HepG2 (cell line): ENCODE measurements at regions of chr17 and their contacts with region 1.

Region 1: DNA sequence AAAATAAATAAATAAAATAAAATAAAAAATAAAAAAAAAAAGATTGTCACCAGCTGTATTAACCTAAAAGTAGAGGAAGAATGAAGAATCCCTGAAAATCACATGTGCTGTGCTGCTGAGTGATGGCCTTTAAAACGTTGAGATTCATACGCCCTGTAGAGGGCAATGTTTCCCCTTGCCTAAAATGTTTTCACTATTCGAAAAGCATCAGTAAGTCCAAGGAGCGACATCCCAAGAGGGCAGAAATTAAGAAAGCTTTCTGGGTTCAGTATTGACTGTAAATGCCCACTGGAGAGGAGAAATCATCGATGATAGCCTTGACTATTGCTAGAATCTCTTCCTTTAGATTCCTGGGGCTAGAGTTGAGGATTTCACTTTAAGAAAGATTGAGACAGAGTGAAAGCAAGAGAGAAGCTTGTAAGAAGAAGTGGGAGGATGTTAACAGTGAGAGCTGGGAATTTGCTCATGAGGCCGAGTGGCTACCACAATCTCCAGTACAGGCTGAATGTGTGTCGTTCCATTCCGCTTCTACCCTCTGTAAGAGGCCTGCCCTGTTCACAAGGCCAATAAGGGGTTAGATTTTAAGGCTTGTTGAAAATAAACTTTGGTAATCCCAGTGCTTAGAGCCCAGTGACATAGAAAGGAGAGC is 170.8 kb upstream of the FAM20A start:
- DNase-seq: peak; percentile 71
- ATAC-seq: peak; percentile 75
- H3K4me3 ChIP-seq: peak overlapping the region in 1 of 3 experiments; percentile 11; a peak in 1 of 6 replicates
- H3K27ac ChIP-seq: no peak overlapping the region
- H3K4me1 ChIP-seq: peaks cover 37% of the 10 kb centered on the region
- H3K27me3 ChIP-seq: no peaks in the 10 kb centered on the region
- CTCF ChIP-seq: peak; percentile 86
- EP300 ChIP-seq: no peak
- POLR2A ChIP-seq: no peak
- RAD21 ChIP-seq: peak; percentile 72

Region 2: DNA sequence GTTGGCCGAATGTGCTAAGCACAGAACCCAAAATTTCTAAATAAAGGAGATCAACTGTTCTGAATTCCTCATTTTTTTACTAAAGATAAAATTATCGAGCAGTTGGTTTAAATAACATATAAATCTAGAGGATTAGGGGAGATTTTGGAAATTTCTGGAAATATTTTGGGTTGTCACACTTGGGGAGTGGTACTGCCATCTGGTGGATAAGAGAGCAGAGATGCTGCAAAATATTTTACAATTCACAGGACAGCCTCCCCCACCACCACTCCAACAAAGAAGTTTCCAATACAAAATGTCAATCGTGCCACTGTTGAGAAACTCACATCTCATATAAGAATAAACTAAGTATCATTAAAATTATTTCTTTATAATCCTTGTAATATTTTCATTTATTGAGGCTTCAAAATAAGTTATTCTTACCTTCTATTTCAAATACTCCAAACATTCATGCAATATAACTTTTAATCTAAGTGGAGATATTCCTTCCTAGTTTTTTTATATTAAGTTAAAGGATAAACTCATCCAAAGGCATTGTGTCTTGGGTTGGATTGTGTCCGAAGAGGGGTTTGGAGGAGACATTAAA is 200.2 kb after region 1 on chr17:
- CTCF ChIA-PET with region 1: interaction called, 33 read pairs
- POLR2A ChIA-PET with region 1: no interaction called
- in situ Hi-C with region 1: loop called (anchors 5 kb)
- intact Hi-C with region 1: loop called (anchors 1 kb)
- DNase-seq: peak; percentile 43
- ATAC-seq: no peak
- H3K4me3 ChIP-seq: no peak overlapping the region
- H3K27ac ChIP-seq: no peak overlapping the region
- H3K4me1 ChIP-seq: 0 out of 2 replicates have a peak, but pooled peaks cover 10% of the 10 kb centered on the region
- H3K27me3 ChIP-seq: no peaks in the 10 kb centered on the region
- CTCF ChIP-seq: peak; percentile 73
- EP300 ChIP-seq: peak in 1 of 2 experiments; percentile 38; a peak in 1 of 4 replicates
- POLR2A ChIP-seq: no peak
- RAD21 ChIP-seq: peak; percentile 85

Region 3: DNA sequence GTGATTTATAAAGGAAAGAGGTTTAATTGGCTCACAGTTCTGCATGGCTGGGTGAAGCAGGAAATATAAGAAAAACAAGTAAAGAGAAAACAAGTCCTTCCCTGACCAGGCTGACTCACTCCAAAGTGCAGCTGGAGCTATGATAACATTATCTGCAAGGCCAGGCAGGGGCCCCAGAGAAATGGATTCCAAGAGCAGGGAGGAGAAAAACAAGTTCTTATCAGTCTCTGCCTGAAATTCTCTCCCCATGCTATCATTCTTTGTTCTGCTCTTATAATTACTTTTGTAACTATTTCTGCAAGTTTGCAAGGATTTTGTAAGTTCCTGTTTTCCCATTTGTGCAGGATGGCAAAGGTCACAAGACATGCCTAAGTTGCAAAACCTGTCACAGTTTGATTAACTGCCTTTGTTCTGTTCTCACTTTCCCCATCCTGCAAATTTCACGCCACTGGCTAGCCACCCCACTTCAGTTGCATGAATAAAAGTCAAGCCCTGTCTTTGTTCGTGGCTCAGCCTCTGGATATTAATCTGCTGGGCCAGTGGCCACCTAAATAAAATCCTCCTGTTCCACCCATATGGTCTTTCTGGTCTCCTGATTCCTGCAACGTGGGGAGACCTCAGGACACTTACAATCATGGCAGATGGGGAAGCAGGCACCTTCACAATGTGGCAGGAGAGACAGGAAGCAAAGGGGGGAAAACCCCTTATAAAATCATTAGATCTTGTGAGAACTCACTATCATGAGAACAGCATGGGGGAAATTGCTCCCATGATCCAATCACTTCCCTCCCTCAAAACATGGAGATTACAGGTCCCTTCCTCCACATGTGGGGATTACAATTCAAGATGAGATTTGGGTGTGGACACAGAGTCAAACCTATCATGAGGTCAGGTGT is 275.6 kb after region 1 on chr17:
- CTCF ChIA-PET with region 1: no interaction called
- POLR2A ChIA-PET with region 1: interaction called, 6 read pairs
- in situ Hi-C with region 1: loop called (anchors 25 kb)
- intact Hi-C with region 1: loop called (anchors 1 kb)
- DNase-seq: peak; percentile 100
- ATAC-seq: peak; percentile 98
- H3K4me3 ChIP-seq: peak overlapping the region in 1 of 3 experiments; percentile 23; a peak in 1 of 6 replicates
- H3K27ac ChIP-seq: peak overlapping the region; percentile 93
- H3K4me1 ChIP-seq: peaks cover 73% of the 10 kb centered on the region
- H3K27me3 ChIP-seq: no peaks in the 10 kb centered on the region; a peak in 1 of 5 replicates
- CTCF ChIP-seq: no peak
- EP300 ChIP-seq: peak; percentile 87 to 99
- POLR2A ChIP-seq: no peak
- RAD21 ChIP-seq: no peak

Region 4: DNA sequence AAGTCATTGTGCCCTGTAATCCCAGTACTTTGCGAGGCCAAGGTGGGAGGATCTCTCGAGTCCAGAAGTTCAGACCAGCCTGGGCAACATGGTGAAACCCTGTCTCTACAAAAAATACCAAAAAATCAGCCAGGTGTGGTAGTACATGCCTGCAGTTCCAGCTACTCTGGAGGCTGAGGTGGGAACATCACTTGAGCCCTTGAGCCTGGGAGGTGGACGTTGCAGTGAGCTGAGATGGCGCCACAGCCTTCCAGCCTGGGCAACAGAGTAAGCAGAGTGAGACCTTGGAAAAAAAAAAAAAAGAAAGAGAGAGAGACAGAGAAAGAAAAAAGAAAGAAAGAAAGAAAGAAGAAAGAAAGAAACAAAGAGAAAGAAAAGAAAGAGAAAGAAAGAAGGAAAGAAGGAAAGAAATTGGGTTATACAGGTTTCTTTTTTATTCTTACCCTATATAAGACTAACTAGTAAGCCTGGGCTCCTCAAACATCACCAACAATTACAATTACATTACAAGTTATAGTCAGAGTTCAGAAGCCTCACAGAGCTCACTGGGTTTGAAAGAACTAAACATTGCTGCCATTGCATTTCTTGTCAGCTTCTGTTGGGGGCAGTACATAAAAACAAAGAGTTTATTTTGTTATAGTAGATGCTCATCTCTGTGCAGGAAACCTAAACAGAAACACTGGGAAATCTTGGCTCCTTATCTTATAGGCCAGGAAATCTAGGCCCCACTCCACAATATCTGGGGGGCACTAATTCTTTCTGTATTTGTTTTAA is 295.5 kb after region 1 on chr17:
- CTCF ChIA-PET with region 1: no interaction called
- POLR2A ChIA-PET with region 1: no interaction called
- in situ Hi-C with region 1: loop called (anchors 25 kb)
- intact Hi-C with region 1: loop called (anchors 5 kb)
- DNase-seq: no peak
- ATAC-seq: no peak
- H3K4me3 ChIP-seq: no peak overlapping the region
- H3K27ac ChIP-seq: no peak overlapping the region
- H3K4me1 ChIP-seq: peaks cover 57% of the 10 kb centered on the region
- H3K27me3 ChIP-seq: no peaks in the 10 kb centered on the region
- CTCF ChIP-seq: 0 out of 2 replicates have a peak, but pooled peaks have one; percentile 7
- EP300 ChIP-seq: no peak
- POLR2A ChIP-seq: no peak
- RAD21 ChIP-seq: no peak

Region 5: DNA sequence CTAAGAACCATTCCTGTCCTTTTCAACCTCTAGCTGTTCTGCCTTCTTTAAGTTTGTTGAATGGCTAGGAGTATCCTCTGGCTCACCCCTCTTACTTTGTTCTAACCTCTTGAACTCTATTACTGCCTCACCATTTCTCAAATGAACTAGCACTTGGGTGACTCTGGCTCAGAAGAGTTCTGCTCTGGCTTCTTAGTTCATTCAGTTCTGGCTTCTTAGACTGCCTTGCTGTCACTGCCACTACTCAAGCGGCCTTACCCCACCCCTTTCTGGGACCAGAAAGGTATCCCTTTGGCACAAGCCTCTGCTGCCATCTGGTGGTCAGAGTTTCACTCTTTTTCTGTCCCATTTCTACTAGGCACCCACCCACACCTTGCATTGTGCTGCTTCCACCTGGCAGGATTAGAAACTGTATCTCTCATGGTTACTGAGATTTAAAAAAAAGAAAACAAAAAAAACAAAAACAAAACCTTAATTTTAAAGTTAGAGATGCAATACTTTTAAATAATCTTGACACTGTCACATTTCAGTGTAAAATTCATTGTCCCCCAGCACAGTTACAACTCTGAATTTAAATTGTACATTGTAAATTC is 463.4 kb after region 1 on chr17:
- CTCF ChIA-PET with region 1: interaction called, 117 read pairs
- POLR2A ChIA-PET with region 1: interaction called, 8 read pairs
- in situ Hi-C with region 1: loop called (anchors 5 kb)
- intact Hi-C with region 1: loop called (anchors 1 kb)
- DNase-seq: peak; percentile 88
- ATAC-seq: peak; percentile 100
- H3K4me3 ChIP-seq: no peak overlapping the region
- H3K27ac ChIP-seq: no peak overlapping the region
- H3K4me1 ChIP-seq: peaks cover 14% of the 10 kb centered on the region
- H3K27me3 ChIP-seq: no peaks in the 10 kb centered on the region
- CTCF ChIP-seq: peak; percentile 97
- EP300 ChIP-seq: no peak
- POLR2A ChIP-seq: no peak
- RAD21 ChIP-seq: peak; percentile 98

Region 6: DNA sequence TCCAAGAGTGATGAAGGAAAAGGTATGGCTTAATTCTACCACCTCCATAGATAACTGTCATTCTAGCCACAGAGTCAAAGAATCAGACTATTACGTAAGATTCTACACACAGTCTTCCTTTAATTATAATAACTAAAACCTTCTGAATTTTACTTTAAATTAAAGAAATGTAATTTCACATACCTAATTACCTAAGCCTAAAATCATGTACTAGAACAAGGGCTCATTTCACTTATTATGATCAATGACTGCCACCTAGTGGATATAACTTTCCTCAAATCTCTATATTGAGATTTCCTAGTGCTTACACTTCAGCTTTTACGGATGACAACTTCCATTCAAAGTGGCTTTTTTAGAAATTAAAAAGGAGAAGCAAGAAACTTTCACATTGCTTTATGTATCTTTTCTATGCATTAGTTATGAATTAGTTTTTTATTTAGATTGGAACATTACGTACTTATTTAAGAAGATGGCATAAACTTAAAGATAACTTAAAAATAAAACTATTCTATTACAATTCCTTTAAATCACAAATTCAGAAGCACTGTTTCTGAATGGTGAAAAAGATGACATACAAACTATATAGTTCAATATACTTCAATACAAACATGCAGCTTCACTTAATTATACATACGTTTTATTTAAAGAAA is 474.9 kb after region 1 on chr17:
- CTCF ChIA-PET with region 1: interaction called, 47 read pairs
- POLR2A ChIA-PET with region 1: interaction called, 3 read pairs
- in situ Hi-C with region 1: no loop called
- intact Hi-C with region 1: loop called (anchors 1 kb)
- DNase-seq: peak; percentile 62
- ATAC-seq: no peak; the same call in 2 of the 3 replicates
- H3K4me3 ChIP-seq: no peak overlapping the region
- H3K27ac ChIP-seq: no peak overlapping the region
- H3K4me1 ChIP-seq: no peaks in the 10 kb centered on the region
- H3K27me3 ChIP-seq: no peaks in the 10 kb centered on the region
- CTCF ChIP-seq: peak; percentile 78
- EP300 ChIP-seq: no peak
- POLR2A ChIP-seq: no peak
- RAD21 ChIP-seq: peak; percentile 69

Region 7: DNA sequence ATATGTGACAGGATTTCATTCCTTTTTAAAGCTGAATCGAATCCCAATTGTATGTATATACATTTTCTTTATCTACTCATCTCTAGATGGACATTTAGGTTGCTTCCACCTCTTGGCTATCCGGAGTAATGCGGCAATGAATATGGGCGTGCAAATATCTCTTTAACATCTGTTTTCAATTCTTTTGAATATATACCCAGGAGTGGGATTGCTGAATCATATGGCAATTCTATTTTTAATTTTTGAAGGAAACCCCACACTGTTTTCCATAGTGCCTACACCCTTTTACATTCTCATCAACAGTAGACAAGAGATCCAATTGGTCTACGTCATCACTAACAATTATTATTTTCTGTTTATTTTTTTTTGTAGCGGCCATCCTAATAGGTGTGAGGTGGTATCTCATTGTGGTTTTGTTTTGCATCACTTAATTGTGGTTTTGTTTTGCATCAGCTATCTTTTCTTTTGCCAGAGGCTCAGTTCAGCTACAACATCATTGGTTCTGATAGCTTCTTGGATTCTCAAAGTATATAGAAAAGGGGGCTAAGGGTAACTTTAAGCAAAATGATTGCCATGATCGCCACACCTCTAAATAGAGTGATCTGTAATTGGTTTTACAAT is 616.9 kb after region 1 on chr17:
- CTCF ChIA-PET with region 1: no interaction called
- POLR2A ChIA-PET with region 1: no interaction called
- in situ Hi-C with region 1: no loop called
- intact Hi-C with region 1: loop called (anchors 5 kb)
- DNase-seq: no peak
- ATAC-seq: no peak
- H3K4me3 ChIP-seq: no peak overlapping the region
- H3K27ac ChIP-seq: no peak overlapping the region
- H3K4me1 ChIP-seq: peaks cover 15% of the 10 kb centered on the region
- H3K27me3 ChIP-seq: no peaks in the 10 kb centered on the region
- CTCF ChIP-seq: no peak
- EP300 ChIP-seq: no peak
- POLR2A ChIP-seq: no peak
- RAD21 ChIP-seq: no peak